A549 (cell line): ENCODE measurements at regions of chr3 and their contacts with region 1.

Region 1: DNA sequence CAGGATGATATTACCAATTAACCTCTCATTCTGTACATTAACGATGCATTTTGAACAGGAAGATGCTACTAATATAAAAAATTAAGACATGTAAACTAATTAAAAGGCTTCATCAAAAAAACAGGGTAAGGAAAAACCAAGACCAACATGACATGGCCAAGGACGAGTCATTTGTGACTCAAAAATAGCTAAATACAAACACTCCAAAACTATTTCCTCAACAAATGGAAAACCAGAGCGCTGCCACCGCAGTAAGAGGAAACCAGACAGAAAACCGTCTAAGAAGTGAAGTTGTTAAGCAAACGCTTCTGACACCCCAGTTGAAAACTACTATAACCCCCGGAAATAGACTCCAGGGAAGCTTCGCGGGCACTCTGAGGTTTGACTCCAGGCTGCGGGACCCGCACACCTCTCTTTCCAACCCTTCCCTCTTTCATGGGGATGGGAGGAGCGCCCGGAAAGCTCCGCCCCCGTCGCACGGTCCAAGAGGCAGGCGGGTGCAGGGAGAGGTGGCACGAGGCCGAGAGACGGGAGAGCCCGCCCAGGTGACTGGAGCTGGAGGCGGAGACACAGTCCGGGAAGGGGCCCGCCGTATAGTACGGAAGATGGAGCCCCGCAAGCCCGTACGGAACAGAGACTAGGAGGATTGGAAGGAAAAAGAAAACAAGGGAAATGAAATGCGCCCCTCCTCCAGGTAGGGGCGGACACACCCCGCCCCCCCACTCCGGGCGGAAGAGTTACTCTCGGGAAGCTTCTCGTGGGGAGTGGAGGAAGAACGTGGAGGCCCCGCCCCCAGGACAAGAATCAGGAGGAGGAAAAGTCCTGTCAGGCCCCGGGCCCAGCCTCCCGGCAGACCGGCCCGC is 708 bp downstream of the DCAF1 start:
- DNase-seq: peak; percentile 69 to 94
- ATAC-seq: peak; percentile 86 to 88
- H3K4me3 ChIP-seq: peak overlapping the region; percentile 63
- H3K27ac ChIP-seq: peak overlapping the region; percentile 92 to 99
- H3K4me1 ChIP-seq: 0 out of 3 replicates have a peak, but pooled peaks cover 4% of the 10 kb centered on the region
- CTCF ChIP-seq: no peak
- EP300 ChIP-seq: no peak
- POLR2A ChIP-seq: no peak
- RAD21 ChIP-seq: no peak

Region 2: DNA sequence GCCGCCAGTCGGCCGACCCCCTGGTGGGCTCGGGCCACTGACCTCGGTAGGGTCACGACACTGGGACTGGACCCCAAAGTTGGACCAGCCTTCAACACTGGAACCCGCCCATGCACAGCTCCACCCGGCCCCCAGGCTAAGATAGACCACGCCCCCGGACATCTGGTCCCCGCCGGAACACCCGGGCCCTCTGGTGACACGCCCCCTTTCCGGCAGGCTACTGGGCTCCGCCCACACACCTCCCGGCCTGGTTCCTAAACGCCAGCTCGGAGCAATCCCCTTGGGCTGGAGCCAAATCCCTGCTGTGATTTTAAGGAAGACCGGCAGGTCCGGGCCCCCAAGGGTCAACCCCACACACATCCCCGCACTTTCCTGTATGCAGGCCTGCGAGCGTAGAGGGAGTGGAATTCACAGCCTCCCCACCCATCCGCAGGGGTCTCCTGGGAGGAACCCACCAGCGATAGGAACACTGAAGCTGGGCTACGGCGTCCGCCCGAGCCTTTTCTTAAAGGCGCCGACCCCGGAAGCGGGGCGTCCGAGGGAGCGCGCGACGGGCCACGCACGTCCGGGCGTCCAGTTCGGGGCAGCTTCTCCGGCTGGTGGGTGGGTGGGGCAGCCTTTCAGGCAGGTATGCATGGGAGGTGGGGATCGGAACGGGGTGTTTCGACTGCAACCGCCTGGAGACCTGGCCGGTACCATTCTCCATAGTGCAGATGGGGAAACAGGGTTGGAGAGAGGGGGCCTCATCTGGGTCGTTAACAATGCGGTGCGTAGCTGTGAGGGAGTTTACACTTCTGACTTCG is 930.0 kb before region 1 on chr3 and contains the start of gene HEMK1:
- CTCF ChIA-PET with region 1: no interaction called
- POLR2A ChIA-PET with region 1: interaction called, 10 read pairs
- DNase-seq: peak; percentile 91 to 95
- ATAC-seq: peak; percentile 78 to 87
- H3K4me3 ChIP-seq: peak within 1 kb of the TSS; percentile 98
- H3K27ac ChIP-seq: peak within 1 kb of the TSS; percentile 95 to 97
- H3K4me1 ChIP-seq: peaks cover 20% of the 10 kb centered on the region
- CTCF ChIP-seq: no peak
- EP300 ChIP-seq: no peak
- POLR2A ChIP-seq: peak; percentile 23
- RAD21 ChIP-seq: no peak
- polyA plus RNA-seq, gene HEMK1: 4.7 and 5.1 TPM in 2 replicates

Region 3: GRCh38 chr3:51445544-51446280 is 53.4 kb before region 1 on chr3:
- CTCF ChIA-PET with region 1: interaction called, 3 read pairs
- POLR2A ChIA-PET with region 1: interaction called, 10 read pairs
- DNase-seq: no peak
- ATAC-seq: no peak
- H3K4me3 ChIP-seq: no peak overlapping the region
- H3K27ac ChIP-seq: no peak overlapping the region
- H3K4me1 ChIP-seq: 0 out of 3 replicates have a peak, but pooled peaks cover 4% of the 10 kb centered on the region
- CTCF ChIP-seq: no peak
- EP300 ChIP-seq: no peak
- POLR2A ChIP-seq: no peak
- RAD21 ChIP-seq: no peak

Region 4: GRCh38 chr3:51581529-51581928 is 82.4 kb after region 1 on chr3:
- CTCF ChIA-PET with region 1: no interaction called
- POLR2A ChIA-PET with region 1: no interaction called
- DNase-seq: no peak
- ATAC-seq: no peak; a peak in 1 of 6 replicates
- H3K4me3 ChIP-seq: no peak overlapping the region
- H3K27ac ChIP-seq: no peak overlapping the region
- H3K4me1 ChIP-seq: no peaks in the 10 kb centered on the region
- CTCF ChIP-seq: no peak
- EP300 ChIP-seq: no peak
- POLR2A ChIP-seq: no peak
- RAD21 ChIP-seq: no peak

Region 5: DNA sequence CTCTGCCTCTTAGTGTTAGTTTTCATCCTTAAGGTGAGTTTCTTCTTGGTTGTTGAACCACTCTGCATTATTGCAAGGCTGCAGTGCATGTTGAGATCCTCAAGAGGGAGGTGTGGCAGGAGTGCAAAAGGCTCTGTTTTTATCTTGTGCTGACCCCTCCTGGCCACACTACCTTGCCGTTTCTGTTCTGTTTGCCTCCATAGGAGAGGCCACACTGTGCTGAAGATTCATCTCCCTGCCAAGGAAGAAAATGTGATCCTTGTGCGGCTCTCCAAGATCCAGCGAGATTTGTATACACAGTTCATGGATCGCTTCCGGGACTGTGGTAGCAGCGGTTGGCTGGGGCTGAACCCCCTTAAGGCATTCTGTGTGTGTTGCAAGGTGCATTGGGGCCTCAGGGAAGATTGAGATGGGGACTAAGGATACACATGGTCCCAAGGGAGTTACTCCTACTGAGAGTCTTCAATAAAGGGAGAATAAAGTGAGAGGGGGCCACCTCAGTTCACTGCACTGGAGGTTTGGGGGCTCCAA is 138.9 kb after region 1 on chr3:
- CTCF ChIA-PET with region 1: interaction called, 12 read pairs
- POLR2A ChIA-PET with region 1: no interaction called
- DNase-seq: peak; percentile 72 to 83
- ATAC-seq: peak; percentile 99
- H3K4me3 ChIP-seq: no peak overlapping the region
- H3K27ac ChIP-seq: no peak overlapping the region
- H3K4me1 ChIP-seq: no peaks in the 10 kb centered on the region
- CTCF ChIP-seq: peak; percentile 80
- EP300 ChIP-seq: no peak
- POLR2A ChIP-seq: no peak
- RAD21 ChIP-seq: peak; percentile 58 to 76

Region 6: DNA sequence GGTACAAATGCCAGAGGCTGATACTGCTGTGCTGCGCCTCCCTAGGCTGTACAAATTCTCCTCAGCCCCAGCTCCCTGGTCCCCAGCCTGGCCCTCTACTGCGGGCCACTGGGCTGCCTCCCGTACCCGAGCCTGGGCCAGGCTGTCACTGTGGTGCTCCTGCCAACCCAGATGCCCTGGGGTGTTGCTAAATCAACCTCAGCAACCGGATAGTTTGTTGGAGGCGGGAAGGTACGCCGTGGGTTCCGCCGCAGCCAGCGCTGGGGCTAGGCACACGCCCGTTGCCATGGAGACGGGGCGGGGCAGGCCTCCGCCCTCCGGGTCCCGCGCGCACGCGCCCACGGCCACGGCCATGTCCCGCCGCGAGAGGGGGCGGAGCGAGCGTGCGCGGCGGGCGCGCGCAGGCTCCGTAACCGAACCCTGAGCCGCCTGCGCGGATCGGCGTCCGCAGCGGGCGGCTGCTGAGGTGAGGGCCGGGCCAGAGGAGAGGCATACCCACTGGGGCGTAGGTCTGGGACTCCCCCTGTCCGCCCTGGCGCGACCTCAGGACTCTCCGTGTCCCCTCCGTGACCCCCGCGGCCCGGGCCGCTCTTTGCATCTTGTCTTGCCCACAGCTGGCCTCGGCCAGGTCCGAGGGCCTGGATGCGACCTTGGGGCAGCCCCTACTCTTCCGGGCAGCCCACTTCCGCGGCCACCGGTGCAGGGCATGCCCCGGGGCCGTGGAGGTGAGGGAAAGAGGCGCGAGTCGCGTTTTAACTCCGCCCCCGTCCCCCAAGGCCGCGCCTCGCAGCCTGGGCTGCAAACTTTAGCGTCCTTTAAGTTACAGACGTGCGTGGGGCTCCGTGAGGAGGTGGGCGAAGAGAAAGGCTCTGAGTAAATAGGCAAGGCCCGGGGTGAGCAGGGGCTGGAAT is 172.0 kb after region 1 on chr3 and contains the start of gene TEX264:
- CTCF ChIA-PET with region 1: interaction called, 83 read pairs
- POLR2A ChIA-PET with region 1: interaction called, 11 read pairs
- DNase-seq: peak; percentile 77 to 80
- ATAC-seq: peak; percentile 77 to 88
- H3K4me3 ChIP-seq: peak within 1 kb of the TSS; percentile 58
- H3K27ac ChIP-seq: peak within 1 kb of the TSS; percentile 86 to 98
- H3K4me1 ChIP-seq: peaks cover 18% of the 10 kb centered on the region
- CTCF ChIP-seq: no peak
- EP300 ChIP-seq: no peak
- POLR2A ChIP-seq: peak; percentile 82
- RAD21 ChIP-seq: no peak
- polyA plus RNA-seq, gene TEX264: 47.9 and 59.3 TPM in 2 replicates